Activated CD4-positive, alpha-beta memory T cell treated with anti-CD3 and anti-CD28 coated beads for 36 hours (primary cell): ENCODE measurements at regions of chr10 and their contacts with region 1.

Region 1: GRCh38 chr10:9342885-9343570 is 1288.5 kb downstream of the GATA3 start:
- DNase-seq: no peak
- H3K4me3 Mint-ChIP-seq: no peak overlapping the region
- H3K27ac Mint-ChIP-seq: no peak overlapping the region
- H3K4me1 Mint-ChIP-seq: peaks cover 1% of the 10 kb centered on the region
- H3K27me3 Mint-ChIP-seq: no peaks in the 10 kb centered on the region

Region 2: GRCh38 chr10:9305034-9305655 is 37.9 kb before region 1 on chr10:
- CTCF ChIA-PET with region 1: no interaction called
- POLR2A ChIA-PET with region 1: no interaction called
- intact Hi-C with region 1: no loop called
- DNase-seq: no peak
- H3K4me3 Mint-ChIP-seq: no peak overlapping the region
- H3K27ac Mint-ChIP-seq: no peak overlapping the region
- H3K4me1 Mint-ChIP-seq: no peaks in the 10 kb centered on the region
- H3K27me3 Mint-ChIP-seq: peaks cover 9% of the 10 kb centered on the region

Region 3: GRCh38 chr10:9331583-9332008 is 11.4 kb before region 1 on chr10:
- CTCF ChIA-PET with region 1: interaction called, 10 read pairs
- POLR2A ChIA-PET with region 1: no interaction called
- intact Hi-C with region 1: no loop called
- DNase-seq: no peak
- H3K4me3 Mint-ChIP-seq: no peak overlapping the region
- H3K27ac Mint-ChIP-seq: no peak overlapping the region
- H3K4me1 Mint-ChIP-seq: no peaks in the 10 kb centered on the region
- H3K27me3 Mint-ChIP-seq: peaks cover 4% of the 10 kb centered on the region

Region 4: DNA sequence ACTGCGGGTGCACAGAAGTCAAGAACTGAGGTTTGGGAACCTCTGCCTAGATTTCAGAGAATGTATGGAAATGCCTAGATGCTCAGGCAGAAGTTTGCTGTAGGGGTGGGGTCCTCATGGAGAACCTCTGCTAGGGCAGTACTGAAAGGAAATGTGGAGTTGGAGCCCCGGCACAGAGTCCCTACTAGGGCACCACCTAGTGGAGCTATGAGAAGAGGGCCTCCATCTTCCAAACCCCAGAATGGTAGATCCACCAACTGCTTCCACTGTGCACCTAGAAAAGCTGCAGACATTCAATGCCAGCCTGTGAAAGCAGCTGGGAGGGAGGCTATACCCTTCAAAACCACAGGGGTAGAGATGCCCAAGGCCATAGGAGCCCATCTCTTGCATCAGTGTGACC is 338.6 kb after region 1 on chr10:
- CTCF ChIA-PET with region 1: no interaction called
- POLR2A ChIA-PET with region 1: no interaction called
- intact Hi-C with region 1: loop called (anchors 10 kb)
- DNase-seq: no peak
- H3K4me3 Mint-ChIP-seq: no peak overlapping the region
- H3K27ac Mint-ChIP-seq: no peak overlapping the region
- H3K4me1 Mint-ChIP-seq: no peaks in the 10 kb centered on the region
- H3K27me3 Mint-ChIP-seq: no peaks in the 10 kb centered on the region

Region 5: DNA sequence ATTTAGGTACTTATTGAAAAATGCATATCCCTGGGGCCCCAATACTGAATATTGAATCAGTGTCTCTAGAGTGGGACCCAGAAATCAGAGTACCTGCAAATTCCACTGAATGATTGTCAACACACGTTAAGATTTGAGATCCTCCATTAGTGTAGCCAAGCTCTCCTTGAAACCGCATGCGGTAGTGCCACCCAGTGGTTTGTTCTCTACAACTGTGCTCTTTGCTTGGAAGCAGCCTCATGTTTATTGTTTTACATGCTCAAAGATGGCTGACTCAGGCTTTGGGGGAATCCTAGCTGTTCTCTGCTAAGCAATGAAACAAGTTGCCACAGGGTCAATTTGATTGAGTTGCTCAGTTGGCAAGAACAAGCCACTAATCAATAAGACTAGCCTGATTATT is 1334.5 kb after region 1 on chr10:
- CTCF ChIA-PET with region 1: no interaction called
- POLR2A ChIA-PET with region 1: no interaction called
- intact Hi-C with region 1: loop called (anchors 2 kb)
- DNase-seq: peak; percentile 64
- H3K4me3 Mint-ChIP-seq: no peak overlapping the region
- H3K27ac Mint-ChIP-seq: no peak overlapping the region
- H3K4me1 Mint-ChIP-seq: no peaks in the 10 kb centered on the region
- H3K27me3 Mint-ChIP-seq: peaks cover 3% of the 10 kb centered on the region